ENCODE measurements at regions of chr6 and their contacts with region 1.

Region 1: GRCh38 chr6:29752451-29753308 is 29.4 kb downstream of the HLA-F start:
- DNase-seq: peak; percentile 92
- H3K4me3 ChIP-seq: peak overlapping the region; percentile 48 to 96 (median 82)
- H3K27ac ChIP-seq: peak overlapping the region; percentile 76
- H3K4me1 ChIP-seq: peaks cover 21% of the 10 kb centered on the region
- H3K27me3 ChIP-seq: peaks cover 8 to 26% of the 10 kb centered on the region in 2 experiments
- CTCF ChIP-seq: peak; percentile 99 to 100
- POLR2A ChIP-seq: peak; percentile 47

Region 2: GRCh38 chr6:29705389-29706231 is 47.1 kb before region 1 on chr6:
- CTCF ChIA-PET with region 1: interaction called, 3 read pairs
- POLR2A ChIA-PET with region 1: no interaction called
- dilution Hi-C with region 1: no loop called
- intact Hi-C with region 1: loop called (anchors 1 kb)
- DNase-seq: peak; percentile 39
- H3K4me3 ChIP-seq: no peak overlapping the region
- H3K27ac ChIP-seq: no peak overlapping the region
- H3K4me1 ChIP-seq: no peaks in the 10 kb centered on the region
- H3K27me3 ChIP-seq: peaks cover 7 to 8% of the 10 kb centered on the region in 2 experiments
- CTCF ChIP-seq: peak; percentile 36 to 40
- POLR2A ChIP-seq: no peak

Region 3: GRCh38 chr6:29763491-29764289 is 11.0 kb after region 1 on chr6:
- CTCF ChIA-PET with region 1: interaction called, 16 read pairs
- POLR2A ChIA-PET with region 1: no interaction called
- dilution Hi-C with region 1: no loop called
- intact Hi-C with region 1: loop called (anchors 1 kb)
- DNase-seq: peak; percentile 95
- H3K4me3 ChIP-seq: no peak overlapping the region
- H3K27ac ChIP-seq: peak overlapping the region; percentile 93
- H3K4me1 ChIP-seq: peaks cover 29% of the 10 kb centered on the region
- H3K27me3 ChIP-seq: peaks cover 0 to 4% of the 10 kb centered on the region in 2 experiments
- CTCF ChIP-seq: no peak
- POLR2A ChIP-seq: no peak

Region 4: GRCh38 chr6:29792123-29793035 is 39.7 kb after region 1 on chr6:
- CTCF ChIA-PET with region 1: interaction called, 5 read pairs
- POLR2A ChIA-PET with region 1: no interaction called
- dilution Hi-C with region 1: no loop called
- intact Hi-C with region 1: loop called (anchors 5 kb)
- DNase-seq: peak; percentile 9
- H3K4me3 ChIP-seq: peak overlapping the region in 2 of 3 experiments; percentile 7 to 51
- H3K27ac ChIP-seq: no peak overlapping the region
- H3K4me1 ChIP-seq: no peaks in the 10 kb centered on the region
- H3K27me3 ChIP-seq: peaks cover 31 to 62% of the 10 kb centered on the region in 2 experiments
- CTCF ChIP-seq: peak; percentile 44 to 73
- POLR2A ChIP-seq: no peak

Region 5: DNA sequence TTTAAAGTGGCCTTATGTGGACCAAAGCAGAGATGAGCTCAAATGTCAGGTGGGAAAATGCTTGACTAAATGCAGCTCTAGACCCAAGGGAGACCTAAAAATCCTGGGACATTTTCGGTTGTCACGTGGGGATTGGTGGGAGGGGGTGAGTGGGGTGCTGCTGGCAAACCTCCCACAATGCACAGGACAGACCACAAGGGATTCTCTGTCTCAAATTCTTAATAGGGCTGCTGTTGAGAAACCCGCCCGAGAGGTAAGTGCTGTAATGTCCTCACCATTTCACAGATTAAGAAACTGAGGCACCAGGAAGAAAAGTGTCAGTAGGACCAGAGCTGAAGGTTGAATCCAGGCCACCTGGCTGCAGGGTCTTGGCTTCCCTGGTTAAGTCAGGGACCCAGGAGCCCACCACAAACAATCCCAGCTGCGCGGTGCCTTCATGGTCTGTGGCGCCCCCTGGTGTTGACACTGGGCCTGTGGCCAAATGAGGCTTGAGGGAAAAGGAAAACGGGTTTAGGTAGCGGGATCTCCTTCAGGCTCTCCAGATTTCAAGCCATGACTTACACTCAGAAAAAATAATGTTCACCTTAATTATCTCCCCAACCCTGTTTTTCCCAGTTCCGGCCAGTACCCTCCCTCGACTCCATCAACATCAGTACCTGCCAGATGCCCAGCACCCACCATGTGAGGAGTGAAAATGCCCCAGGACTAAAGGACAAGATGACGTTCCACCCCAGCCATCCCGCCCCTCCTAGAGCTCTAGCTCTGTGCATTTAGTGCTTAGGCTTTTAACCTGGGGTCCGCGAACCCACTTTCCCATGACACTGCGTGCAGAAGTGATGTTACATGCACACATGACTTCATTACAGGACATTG is 82.1 kb after region 1 on chr6:
- CTCF ChIA-PET with region 1: interaction called, 5 read pairs
- POLR2A ChIA-PET with region 1: no interaction called
- dilution Hi-C with region 1: no loop called
- intact Hi-C with region 1: loop called (anchors 5 kb)
- DNase-seq: peak; percentile 8
- H3K4me3 ChIP-seq: no peak overlapping the region
- H3K27ac ChIP-seq: no peak overlapping the region
- H3K4me1 ChIP-seq: no peaks in the 10 kb centered on the region
- H3K27me3 ChIP-seq: peaks cover 24 to 29% of the 10 kb centered on the region in 2 experiments
- CTCF ChIP-seq: peak; percentile 69 to 82
- POLR2A ChIP-seq: no peak

Region 6: DNA sequence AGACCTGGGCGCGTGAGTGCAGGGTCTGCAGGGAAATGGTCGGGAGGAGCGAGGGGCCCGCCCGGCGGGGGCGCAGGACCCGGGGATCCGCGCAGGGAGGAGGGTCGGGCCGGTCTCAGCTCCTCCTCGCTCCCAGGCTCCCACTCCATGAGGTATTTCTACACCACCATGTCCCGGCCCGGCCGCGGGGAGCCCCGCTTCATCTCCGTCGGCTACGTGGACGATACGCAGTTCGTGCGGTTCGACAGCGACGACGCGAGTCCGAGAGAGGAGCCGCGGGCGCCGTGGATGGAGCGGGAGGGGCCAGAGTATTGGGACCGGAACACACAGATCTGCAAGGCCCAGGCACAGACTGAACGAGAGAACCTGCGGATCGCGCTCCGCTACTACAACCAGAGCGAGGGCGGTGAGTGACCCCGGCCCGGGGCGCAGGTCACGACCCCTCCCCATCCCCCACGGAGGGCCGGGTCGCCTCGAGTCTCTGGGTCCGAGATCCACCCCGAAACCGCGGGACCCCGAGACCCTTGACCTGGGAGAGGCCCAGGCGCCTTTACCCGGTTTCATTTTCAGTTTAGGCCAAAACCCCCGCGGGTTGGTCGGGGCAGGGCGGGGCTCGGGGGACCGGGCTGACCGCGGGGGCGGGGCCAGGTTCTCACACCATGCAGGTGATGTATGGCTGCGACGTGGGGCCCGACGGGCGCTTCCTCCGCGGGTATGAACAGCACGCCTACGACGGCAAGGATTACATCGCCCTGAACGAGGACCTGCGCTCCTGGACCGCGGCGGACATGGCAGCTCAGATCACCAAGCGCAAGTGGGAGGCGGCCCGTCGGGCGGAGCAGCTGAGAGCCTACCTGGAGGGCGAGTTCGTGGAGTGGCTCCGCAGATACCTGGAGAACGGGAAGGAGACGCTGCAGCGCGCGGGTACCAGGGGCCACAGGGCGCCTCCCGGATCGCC is 135.4 kb after region 1 on chr6:
- CTCF ChIA-PET with region 1: no interaction called
- POLR2A ChIA-PET with region 1: no interaction called
- dilution Hi-C with region 1: no loop called
- intact Hi-C with region 1: loop called (anchors 2 kb)
- DNase-seq: peak; percentile 10
- H3K4me3 ChIP-seq: peak overlapping the region; percentile 43 to 53 (median 46)
- H3K27ac ChIP-seq: no peak overlapping the region
- H3K4me1 ChIP-seq: peaks cover 5% of the 10 kb centered on the region
- H3K27me3 ChIP-seq: peaks cover 19 to 23% of the 10 kb centered on the region in 2 experiments
- CTCF ChIP-seq: no peak
- POLR2A ChIP-seq: no peak

Region 7: DNA sequence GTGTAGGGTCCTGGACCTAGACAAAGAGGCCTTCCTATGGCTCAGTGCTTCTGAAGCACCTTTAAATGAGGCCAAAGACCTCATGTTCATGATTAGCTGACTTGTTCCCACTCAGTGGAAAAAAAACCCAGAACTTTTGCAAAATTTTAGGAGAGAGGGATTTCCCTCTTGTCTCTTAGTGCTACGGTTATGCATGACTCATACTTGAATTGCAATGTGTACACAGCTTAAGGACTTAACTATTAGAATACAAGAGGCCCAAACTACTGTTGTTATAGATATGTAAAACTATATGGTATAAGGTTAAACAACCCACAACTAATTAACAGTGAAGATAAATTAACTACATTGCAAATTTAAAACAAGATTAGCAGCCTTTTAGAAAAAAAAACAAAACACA is 157.3 kb after region 1 on chr6:
- CTCF ChIA-PET with region 1: no interaction called
- POLR2A ChIA-PET with region 1: no interaction called
- dilution Hi-C with region 1: no loop called
- intact Hi-C with region 1: no loop called
- DNase-seq: no peak
- H3K4me3 ChIP-seq: no peak overlapping the region
- H3K27ac ChIP-seq: no peak overlapping the region
- H3K4me1 ChIP-seq: no peaks in the 10 kb centered on the region
- H3K27me3 ChIP-seq: peaks cover 10 to 31% of the 10 kb centered on the region in 2 experiments
- CTCF ChIP-seq: no peak
- POLR2A ChIP-seq: no peak

Region 8: DNA sequence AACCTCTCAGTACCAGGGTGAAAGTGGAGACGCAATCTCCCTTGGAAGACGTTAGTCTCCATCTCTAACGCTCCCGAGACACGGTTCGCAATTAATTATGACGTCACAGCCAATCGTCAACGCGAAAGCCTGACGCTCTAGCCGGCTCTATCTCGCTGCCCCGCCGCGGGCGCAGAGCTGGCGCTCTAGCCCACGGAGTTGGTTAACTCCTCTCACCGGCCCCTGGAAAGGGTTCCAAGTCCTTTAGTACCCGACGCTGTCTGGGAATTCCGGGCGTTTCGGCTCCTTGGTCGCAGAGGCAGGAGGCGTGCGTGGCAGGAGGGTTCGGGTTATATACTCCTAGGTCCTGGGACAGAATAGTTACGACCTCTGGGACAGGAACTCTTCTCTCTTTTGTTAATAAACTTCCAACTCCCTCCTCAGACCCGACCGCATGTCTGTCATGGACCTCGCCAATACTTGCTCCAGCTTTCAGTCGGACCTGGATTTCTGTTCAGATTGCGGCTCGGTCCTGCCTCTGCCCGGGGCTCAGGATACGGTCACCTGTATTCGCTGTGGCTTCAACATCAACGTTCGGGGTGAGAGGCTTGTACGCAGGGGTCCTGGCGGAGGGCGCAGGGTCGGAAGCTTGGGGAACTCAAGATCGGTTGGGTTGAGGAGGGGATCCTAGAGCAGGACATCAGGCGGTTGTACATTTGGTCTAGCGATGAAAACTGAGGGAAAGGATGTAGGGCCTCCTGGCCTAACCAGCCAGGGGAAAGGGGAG is 308.6 kb after region 1 on chr6 and contains the start of gene POLR1H:
- CTCF ChIA-PET with region 1: no interaction called
- POLR2A ChIA-PET with region 1: no interaction called
- dilution Hi-C with region 1: no loop called
- intact Hi-C with region 1: loop called (anchors 2 kb)
- DNase-seq: peak; percentile 94
- H3K4me3 ChIP-seq: peak within 1 kb of the TSS; percentile 78 to 94 (median 80)
- H3K27ac ChIP-seq: peak within 1 kb of the TSS; percentile 57
- H3K4me1 ChIP-seq: peaks cover 21% of the 10 kb centered on the region
- H3K27me3 ChIP-seq: no peaks in the 10 kb centered on the region
- CTCF ChIP-seq: peak in 1 of 2 donors; percentile 7
- POLR2A ChIP-seq: peak; percentile 98
- total RNA-seq, gene POLR1H: 32.5 and 42.5 TPM in 2 replicates

Measured in endothelial cell of umbilical vein (primary cell).